ENCODE measurements at regions of chr17 and their contacts with region 1.

Region 1: DNA sequence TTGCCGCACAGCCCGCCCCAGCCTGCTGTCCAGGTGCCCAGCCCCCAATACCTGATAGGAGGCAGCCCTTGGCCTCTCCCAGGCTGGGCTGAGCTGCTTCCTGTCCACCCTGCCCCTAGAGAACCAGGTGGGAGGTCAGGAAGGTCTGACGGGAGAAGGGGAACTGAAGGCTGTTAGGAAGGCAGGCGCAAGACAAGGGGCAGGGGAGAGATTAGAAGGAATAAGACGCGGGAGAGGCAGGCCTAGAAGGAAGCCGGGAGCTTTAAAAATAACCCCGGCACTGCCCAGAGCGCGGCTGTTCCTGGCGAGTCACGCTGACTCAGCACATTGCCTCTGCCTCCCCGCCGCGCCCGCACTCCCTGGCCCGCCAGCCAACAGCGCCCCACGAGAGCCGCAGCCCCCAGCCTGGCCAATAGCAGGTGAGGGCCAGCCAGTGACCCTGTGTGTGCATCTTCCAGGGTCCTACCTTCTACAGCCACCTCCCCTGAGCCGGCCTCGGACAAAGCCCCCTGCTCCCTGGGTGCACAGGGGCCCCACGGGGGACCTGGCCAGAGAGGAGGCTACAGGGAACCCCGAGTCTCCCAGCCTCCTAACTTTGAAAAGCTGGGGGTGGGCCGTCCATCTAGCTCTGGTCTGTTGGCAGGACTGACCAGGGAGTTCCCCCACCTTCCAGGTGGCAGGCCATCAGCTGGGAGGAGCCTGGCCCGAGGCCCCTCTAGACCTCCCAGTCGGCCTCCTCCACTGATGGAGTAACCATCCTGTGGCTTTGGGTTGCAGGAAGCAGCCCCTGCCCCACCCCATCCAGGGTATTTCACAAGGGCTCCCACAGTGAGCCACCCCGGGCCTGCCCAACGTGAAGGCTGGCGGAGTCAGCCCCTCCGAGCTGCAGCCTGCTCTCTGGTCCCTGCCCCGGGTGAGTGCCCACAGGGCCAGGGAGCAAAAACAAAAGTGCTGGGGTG is 4.0 kb downstream of the MAFG start:
- DNase-seq: peak; percentile 46
- H3K4me3 ChIP-seq: peak overlapping the region; percentile 58
- H3K27ac ChIP-seq: peak overlapping the region; percentile 90
- H3K27me3 ChIP-seq: no peaks in the 10 kb centered on the region
- CTCF ChIP-seq: no peak

Region 2: DNA sequence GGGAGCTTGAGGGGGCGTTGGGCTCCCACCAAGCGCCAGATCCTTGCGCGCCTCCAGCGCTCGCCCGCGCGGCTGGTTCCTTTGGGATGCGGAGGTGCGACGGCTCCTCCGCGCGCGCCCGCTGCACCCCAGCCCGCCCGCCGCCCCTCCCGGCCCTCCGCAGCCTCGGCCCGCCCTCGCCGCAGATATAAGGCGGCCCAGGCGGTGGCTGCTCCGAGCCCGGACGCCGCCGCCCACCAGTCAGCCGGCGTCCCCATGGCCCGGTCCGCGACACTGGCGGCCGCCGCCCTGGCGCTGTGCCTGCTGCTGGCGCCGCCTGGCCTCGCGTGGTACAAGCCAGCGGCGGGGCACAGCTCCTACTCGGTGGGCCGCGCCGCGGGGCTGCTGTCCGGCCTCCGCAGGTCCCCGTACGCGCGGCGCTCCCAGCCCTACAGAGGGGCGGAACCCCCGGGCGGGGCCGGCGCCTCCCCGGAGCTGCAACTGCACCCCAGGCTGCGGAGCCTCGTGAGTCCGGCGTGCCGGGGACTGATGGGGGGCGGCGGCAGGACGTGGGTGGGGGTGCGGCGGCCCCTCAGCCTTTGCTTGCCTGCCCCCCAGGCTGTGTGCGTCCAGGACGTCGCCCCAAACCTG is 21.4 kb before region 1 on chr17 and contains the start of gene NPB:
- CTCF ChIA-PET with region 1: no interaction called
- POLR2A ChIA-PET with region 1: interaction called, 10 read pairs
- DNase-seq: no peak
- H3K4me3 ChIP-seq: peak within 1 kb of the TSS; percentile 38
- H3K27ac ChIP-seq: no peak within 1 kb of the TSS
- H3K27me3 ChIP-seq: no peaks in the 10 kb centered on the region
- CTCF ChIP-seq: no peak
- polyA plus RNA-seq, gene NPB: 0.20 and 0.30 TPM in 2 replicates